AG04449 (cell line): ENCODE measurements at regions of chr1 and their contacts with region 1.

Region 1: GRCh38 chr1:31745096-31745945 is 18.8 kb downstream of the ADGRB2 start:
- DNase-seq: no peak
- H3K4me3 ChIP-seq: no peak overlapping the region
- CTCF ChIP-seq: peak; percentile 92

Region 2: GRCh38 chr1:31681486-31681885 is 63.8 kb before region 1 on chr1:
- CTCF ChIA-PET with region 1: interaction called, 16 read pairs
- POLR2A ChIA-PET with region 1: no interaction called
- DNase-seq: no peak
- H3K4me3 ChIP-seq: no peak overlapping the region
- CTCF ChIP-seq: no peak

Region 3: DNA sequence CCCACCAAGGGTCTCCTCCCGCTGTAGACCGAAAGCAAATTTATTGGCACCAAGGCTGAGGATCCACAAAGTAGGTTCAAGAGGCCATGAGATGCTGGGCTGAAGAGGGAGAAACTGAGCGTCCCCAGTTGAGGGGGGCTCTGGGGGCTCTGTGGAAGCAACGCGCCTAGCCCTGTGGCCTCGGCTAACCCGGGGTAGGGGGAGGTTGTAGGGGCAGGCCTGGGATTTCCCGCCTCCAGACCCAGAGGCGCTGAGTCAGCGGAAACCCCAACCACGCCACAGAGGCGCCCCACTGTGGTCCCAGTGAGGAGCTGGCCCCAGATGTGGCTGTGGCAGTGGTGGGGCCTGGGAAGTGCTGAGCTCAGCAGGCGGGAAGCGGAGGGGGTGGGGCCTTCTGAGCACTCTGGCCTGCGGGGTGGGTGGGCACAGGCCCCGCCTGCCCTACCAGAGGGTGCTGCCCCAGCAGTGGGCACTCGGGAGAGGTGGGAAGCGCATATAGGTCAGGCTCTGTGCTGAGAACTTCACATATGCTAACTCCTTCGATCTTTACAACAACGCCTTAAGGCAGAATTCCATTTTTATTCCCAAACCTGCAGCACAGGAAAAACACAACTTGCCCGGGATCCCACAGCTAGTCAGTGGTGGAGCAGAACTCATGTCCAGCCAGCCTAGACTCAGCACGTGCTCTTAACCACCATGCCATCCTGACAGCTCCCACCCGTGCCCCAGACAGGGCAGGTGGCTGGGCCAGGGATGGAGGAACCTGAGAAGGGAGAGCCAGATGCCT is 40.0 kb before region 1 on chr1:
- CTCF ChIA-PET with region 1: interaction called, 13 read pairs
- POLR2A ChIA-PET with region 1: interaction called, 4 read pairs
- DNase-seq: no peak
- H3K4me3 ChIP-seq: peak overlapping the region; percentile 80
- CTCF ChIP-seq: peak; percentile 61

Region 4: DNA sequence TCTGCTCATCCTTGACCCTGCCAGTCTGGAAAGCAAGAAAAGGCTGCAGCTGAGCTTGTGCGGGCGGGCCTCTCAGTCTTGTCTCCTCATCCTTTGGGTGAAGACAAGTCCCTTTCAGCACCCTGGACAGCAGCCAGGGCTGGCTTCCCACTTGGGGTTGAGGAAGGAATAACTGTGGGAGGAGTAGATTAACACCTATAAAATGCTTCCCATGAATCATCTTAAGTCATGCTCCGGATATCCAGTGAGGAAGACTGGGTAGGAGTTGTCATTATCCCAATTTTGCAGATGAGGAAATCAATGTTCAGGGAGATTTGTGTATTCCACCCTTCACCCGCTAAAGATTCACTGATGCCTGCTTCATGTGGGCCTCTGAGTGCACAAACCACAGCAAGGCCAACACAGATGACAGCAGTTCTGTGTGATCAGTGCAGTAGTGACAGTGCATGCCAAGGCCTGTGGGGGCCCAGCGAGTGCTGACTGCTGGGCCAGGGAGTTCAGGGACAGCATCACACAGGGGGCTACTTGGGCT is 21.4 kb before region 1 on chr1:
- CTCF ChIA-PET with region 1: interaction called, 87 read pairs
- POLR2A ChIA-PET with region 1: no interaction called
- DNase-seq: no peak
- H3K4me3 ChIP-seq: no peak overlapping the region
- CTCF ChIP-seq: no peak

Region 5: DNA sequence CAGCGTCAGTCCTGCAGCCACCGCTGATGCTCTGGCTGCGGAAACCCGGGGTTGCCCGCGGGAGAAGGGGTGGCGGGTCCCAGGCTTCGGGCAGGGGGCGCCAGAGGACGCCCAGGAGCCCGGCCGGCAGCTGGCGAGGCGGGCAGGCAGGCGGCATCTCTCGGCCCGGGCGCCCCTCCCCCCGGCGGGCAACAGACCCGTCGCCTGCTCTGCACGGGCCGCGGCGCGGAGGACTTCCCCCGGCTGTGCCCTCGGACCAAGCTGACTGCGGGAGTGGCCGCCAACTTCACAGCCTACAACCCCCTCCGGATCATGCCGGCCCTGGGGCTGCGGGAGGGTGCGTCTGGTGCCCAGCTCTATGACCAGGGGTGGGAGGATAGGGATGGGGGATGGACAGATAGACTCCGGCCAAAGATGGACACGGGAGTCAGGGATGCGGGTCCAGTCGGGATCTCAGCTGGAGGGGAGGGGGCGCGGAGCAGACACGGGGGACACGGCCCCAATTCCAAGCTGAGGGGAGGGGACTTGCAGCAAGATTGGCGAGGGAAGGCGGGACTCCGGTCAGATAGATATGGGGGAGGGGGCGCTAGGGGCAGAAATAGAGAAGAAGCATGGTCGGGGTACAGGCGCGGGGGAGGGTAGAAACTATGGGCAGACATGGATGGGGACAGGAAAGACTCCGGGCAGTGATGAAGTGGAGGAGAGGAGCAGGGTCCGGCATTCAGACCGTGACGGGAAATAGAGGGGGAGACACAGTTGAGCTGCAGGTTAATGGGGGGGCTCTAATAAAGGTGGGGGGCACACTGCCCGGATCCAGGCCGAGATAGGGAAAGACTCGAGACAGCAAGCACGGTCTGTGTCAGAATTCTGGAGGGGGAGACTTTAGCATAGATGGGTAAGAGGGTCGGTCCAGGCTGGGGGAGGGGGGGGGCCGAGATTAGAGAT is 17.7 kb after region 1 on chr1:
- CTCF ChIA-PET with region 1: interaction called, 30 read pairs
- POLR2A ChIA-PET with region 1: no interaction called
- DNase-seq: no peak
- H3K4me3 ChIP-seq: peak overlapping the region; percentile 70
- CTCF ChIP-seq: peak; percentile 82